CD4-positive, alpha-beta T cell (primary cell): ENCODE measurements at regions of chr18 and their contacts with region 1.

Region 1: GRCh38 chr18:46173393-46174341 is 69.5 kb downstream of the HAUS1 start:
- DNase-seq: peak; percentile 88 to 96 (median 91)
- ATAC-seq: peak; percentile 91
- H3K4me3 ChIP-seq: peak overlapping the region; percentile 93
- H3K4me3 Mint-ChIP-seq: peak overlapping the region; percentile 99
- H3K27ac ChIP-seq: peak overlapping the region; percentile 64 to 70
- H3K27ac Mint-ChIP-seq: peak overlapping the region; percentile 91
- H3K4me1 ChIP-seq: peaks cover 39% of the 10 kb centered on the region
- H3K4me1 Mint-ChIP-seq: peaks cover 44% of the 10 kb centered on the region
- H3K27me3 ChIP-seq: no peaks in the 10 kb centered on the region
- H3K27me3 Mint-ChIP-seq: no peaks in the 10 kb centered on the region
- CTCF ChIP-seq: peak; percentile 99

Region 2: GRCh38 chr18:46097801-46098615 is 75.7 kb before region 1 on chr18 and contains the start of gene ATP5F1A:
- CTCF ChIA-PET with region 1: interaction called, 14 read pairs
- POLR2A ChIA-PET with region 1: interaction called, 9 read pairs
- intact Hi-C with region 1: no loop called
- DNase-seq: peak; percentile 76 to 93 (median 82)
- ATAC-seq: peak; percentile 84
- H3K4me3 ChIP-seq: peak within 1 kb of the TSS; percentile 82
- H3K4me3 Mint-ChIP-seq: peak within 1 kb of the TSS; percentile 100
- H3K27ac ChIP-seq: peak within 1 kb of the TSS; percentile 74 to 77
- H3K27ac Mint-ChIP-seq: peak within 1 kb of the TSS; percentile 99
- H3K4me1 ChIP-seq: peaks cover 41% of the 10 kb centered on the region
- H3K4me1 Mint-ChIP-seq: peaks cover 34% of the 10 kb centered on the region
- H3K27me3 ChIP-seq: no peaks in the 10 kb centered on the region
- H3K27me3 Mint-ChIP-seq: no peaks in the 10 kb centered on the region
- CTCF ChIP-seq: no peak
- total RNA-seq, gene ATP5F1A: 205 to 206 TPM

Region 3: GRCh38 chr18:46155641-46156051 is 18.0 kb before region 1 on chr18:
- CTCF ChIA-PET with region 1: interaction called, 28 read pairs
- POLR2A ChIA-PET with region 1: interaction called, 6 read pairs
- intact Hi-C with region 1: loop called in 1 of 2 experiments (anchors 2 kb)
- DNase-seq: peak in 11 of 14 experiments; percentile 8 to 88 (median 32)
- ATAC-seq: peak; percentile 90
- H3K4me3 ChIP-seq: peak overlapping the region; percentile 6
- H3K4me3 Mint-ChIP-seq: peak overlapping the region; percentile 16
- H3K27ac ChIP-seq: peak overlapping the region; percentile 62 to 84
- H3K27ac Mint-ChIP-seq: peak overlapping the region; percentile 78
- H3K4me1 ChIP-seq: peaks cover 83% of the 10 kb centered on the region
- H3K4me1 Mint-ChIP-seq: peaks cover 68% of the 10 kb centered on the region
- H3K27me3 ChIP-seq: no peaks in the 10 kb centered on the region
- H3K27me3 Mint-ChIP-seq: no peaks in the 10 kb centered on the region
- CTCF ChIP-seq: no peak

Region 4: GRCh38 chr18:46207985-46208384 is 34.3 kb after region 1 on chr18:
- CTCF ChIA-PET with region 1: interaction called, 48 read pairs
- POLR2A ChIA-PET with region 1: interaction called, 3 read pairs
- intact Hi-C with region 1: loop called (anchors 1 to 2 kb)
- DNase-seq: no peak
- ATAC-seq: no peak
- H3K4me3 ChIP-seq: no peak overlapping the region
- H3K4me3 Mint-ChIP-seq: no peak overlapping the region
- H3K27ac ChIP-seq: no peak overlapping the region
- H3K27ac Mint-ChIP-seq: peak overlapping the region; percentile 8
- H3K4me1 ChIP-seq: peaks cover 25% of the 10 kb centered on the region
- H3K4me1 Mint-ChIP-seq: peaks cover 91% of the 10 kb centered on the region
- H3K27me3 ChIP-seq: no peaks in the 10 kb centered on the region
- H3K27me3 Mint-ChIP-seq: no peaks in the 10 kb centered on the region
- CTCF ChIP-seq: no peak

Region 5: GRCh38 chr18:46250084-46250811 is 76.6 kb after region 1 on chr18:
- CTCF ChIA-PET with region 1: interaction called, 19 read pairs
- POLR2A ChIA-PET with region 1: interaction called, 12 read pairs
- intact Hi-C with region 1: loop called in 1 of 2 experiments (anchors 5 kb)
- DNase-seq: peak in 13 of 14 experiments; percentile 3 to 93 (median 23)
- ATAC-seq: peak; percentile 95
- H3K4me3 ChIP-seq: peak overlapping the region; percentile 46
- H3K4me3 Mint-ChIP-seq: peak overlapping the region; percentile 80
- H3K27ac ChIP-seq: peak overlapping the region; percentile 84 to 88
- H3K27ac Mint-ChIP-seq: peak overlapping the region; percentile 86
- H3K4me1 ChIP-seq: peaks cover 42% of the 10 kb centered on the region
- H3K4me1 Mint-ChIP-seq: peaks cover 57% of the 10 kb centered on the region
- H3K27me3 ChIP-seq: no peaks in the 10 kb centered on the region
- H3K27me3 Mint-ChIP-seq: no peaks in the 10 kb centered on the region
- CTCF ChIP-seq: no peak

Region 6: GRCh38 chr18:46917108-46917802 is 743.6 kb after region 1 on chr18 and contains the starts of genes KATNAL2 and PIAS2:
- CTCF ChIA-PET with region 1: no interaction called
- POLR2A ChIA-PET with region 1: no interaction called
- intact Hi-C with region 1: loop called in 1 of 2 experiments (anchors 10 kb)
- DNase-seq: peak; percentile 55 to 90 (median 70)
- ATAC-seq: peak; percentile 86
- H3K4me3 ChIP-seq: peak within 1 kb of the TSS; percentile 82
- H3K4me3 Mint-ChIP-seq: peak within 1 kb of the TSS; percentile 97
- H3K27ac ChIP-seq: peak within 1 kb of the TSS in 1 of 2 donors; percentile 56
- H3K27ac Mint-ChIP-seq: peak within 1 kb of the TSS; percentile 92
- H3K4me1 ChIP-seq: peaks cover 23% of the 10 kb centered on the region
- H3K4me1 Mint-ChIP-seq: peaks cover 55% of the 10 kb centered on the region
- H3K27me3 ChIP-seq: no peaks in the 10 kb centered on the region
- H3K27me3 Mint-ChIP-seq: no peaks in the 10 kb centered on the region
- CTCF ChIP-seq: no peak
- total RNA-seq, gene KATNAL2: 1.5 to 2.0 TPM
- total RNA-seq, gene PIAS2: 32.0 to 36.3 TPM